Activated naive CD4-positive, alpha-beta T cell treated with anti-CD3 and anti-CD28 coated beads for 36 hours (primary cell): ENCODE measurements at regions of chr10 and their contacts with region 1.

Region 1: DNA sequence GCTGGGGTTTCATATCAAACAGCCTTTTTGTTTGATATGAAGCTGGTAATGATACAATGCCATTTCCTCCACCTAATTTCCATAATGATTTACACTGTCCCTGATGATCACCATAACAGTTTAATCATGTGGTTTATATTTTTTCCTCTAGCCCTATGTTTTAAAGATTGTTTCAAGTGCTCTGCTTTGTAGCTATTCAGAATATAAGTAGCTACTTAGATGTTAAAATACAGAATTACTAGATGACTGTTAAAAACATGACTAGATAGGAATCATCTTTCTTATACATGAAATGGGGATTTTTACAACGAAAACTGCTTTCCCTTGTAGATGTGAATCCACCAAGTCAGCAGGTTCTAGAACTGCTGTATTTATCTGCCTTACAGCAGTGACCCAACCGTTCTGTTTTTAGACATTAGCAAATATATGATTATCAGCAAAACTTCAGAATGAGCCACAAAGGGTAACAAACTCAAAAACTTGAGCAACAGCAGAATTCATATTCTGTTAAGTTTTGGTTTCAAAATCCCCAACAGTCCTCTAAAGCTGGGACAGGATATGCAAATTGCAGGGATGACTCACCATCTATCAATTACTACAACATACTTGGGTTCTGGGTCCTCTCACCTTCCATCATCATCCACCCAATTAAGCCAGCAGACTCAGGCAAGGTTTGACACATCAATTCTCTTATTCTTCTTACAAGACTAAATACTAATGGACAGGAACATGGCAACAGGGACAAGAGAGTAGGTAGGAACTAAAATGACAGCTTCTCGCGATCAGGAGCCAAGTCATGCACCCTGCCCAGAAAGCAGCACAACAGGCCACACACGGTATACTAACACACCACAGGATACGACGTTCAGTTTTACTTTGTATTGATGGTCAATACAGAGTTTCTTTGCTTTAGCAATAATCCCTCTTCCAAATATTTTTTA is 83.9 kb downstream of the PIP4K2A start:
- DNase-seq: peak; percentile 73
- H3K4me3 Mint-ChIP-seq: peak overlapping the region; percentile 67
- H3K27ac Mint-ChIP-seq: peak overlapping the region; percentile 93
- H3K4me1 Mint-ChIP-seq: peaks cover 95% of the 10 kb centered on the region
- H3K27me3 Mint-ChIP-seq: no peaks in the 10 kb centered on the region

Region 2: GRCh38 chr10:22420787-22421517 is 209.6 kb before region 1 on chr10:
- CTCF ChIA-PET with region 1: no interaction called
- intact Hi-C with region 1: no loop called
- DNase-seq: no peak
- H3K4me3 Mint-ChIP-seq: no peak overlapping the region
- H3K27ac Mint-ChIP-seq: no peak overlapping the region
- H3K4me1 Mint-ChIP-seq: no peaks in the 10 kb centered on the region
- H3K27me3 Mint-ChIP-seq: no peaks in the 10 kb centered on the region

Region 3: GRCh38 chr10:22544325-22545068 is 86.0 kb before region 1 on chr10:
- CTCF ChIA-PET with region 1: no interaction called
- intact Hi-C with region 1: no loop called
- DNase-seq: no peak
- H3K4me3 Mint-ChIP-seq: no peak overlapping the region
- H3K27ac Mint-ChIP-seq: no peak overlapping the region
- H3K4me1 Mint-ChIP-seq: peaks cover 3% of the 10 kb centered on the region
- H3K27me3 Mint-ChIP-seq: no peaks in the 10 kb centered on the region

Region 4: DNA sequence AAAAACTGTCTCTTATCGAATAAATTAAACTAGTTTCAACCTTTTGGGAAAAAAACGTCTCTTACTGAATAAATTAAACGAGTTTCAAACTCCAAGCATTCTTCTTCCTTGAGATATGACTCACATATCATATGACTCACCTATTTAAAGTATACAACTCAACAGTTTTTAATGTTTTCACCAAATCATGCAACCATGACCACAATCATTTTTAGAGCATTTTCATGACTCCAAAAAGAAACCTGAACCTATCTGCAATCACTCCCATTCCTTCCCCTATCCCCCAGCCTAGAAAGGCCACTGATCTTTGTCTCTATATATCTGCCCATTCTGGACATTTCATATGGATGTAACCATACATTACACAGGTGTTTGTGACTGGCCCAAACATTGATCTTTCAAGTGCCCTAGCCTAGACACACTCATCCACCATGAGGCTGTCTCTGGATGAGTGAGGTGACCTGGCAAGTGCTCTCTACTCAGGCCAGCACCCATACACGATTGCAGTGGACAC is 31.4 kb before region 1 on chr10:
- CTCF ChIA-PET with region 1: no interaction called
- intact Hi-C with region 1: loop called (anchors 1 kb)
- DNase-seq: no peak
- H3K4me3 Mint-ChIP-seq: no peak overlapping the region
- H3K27ac Mint-ChIP-seq: peak overlapping the region; percentile 9
- H3K4me1 Mint-ChIP-seq: peaks cover 62% of the 10 kb centered on the region
- H3K27me3 Mint-ChIP-seq: no peaks in the 10 kb centered on the region

Region 5: DNA sequence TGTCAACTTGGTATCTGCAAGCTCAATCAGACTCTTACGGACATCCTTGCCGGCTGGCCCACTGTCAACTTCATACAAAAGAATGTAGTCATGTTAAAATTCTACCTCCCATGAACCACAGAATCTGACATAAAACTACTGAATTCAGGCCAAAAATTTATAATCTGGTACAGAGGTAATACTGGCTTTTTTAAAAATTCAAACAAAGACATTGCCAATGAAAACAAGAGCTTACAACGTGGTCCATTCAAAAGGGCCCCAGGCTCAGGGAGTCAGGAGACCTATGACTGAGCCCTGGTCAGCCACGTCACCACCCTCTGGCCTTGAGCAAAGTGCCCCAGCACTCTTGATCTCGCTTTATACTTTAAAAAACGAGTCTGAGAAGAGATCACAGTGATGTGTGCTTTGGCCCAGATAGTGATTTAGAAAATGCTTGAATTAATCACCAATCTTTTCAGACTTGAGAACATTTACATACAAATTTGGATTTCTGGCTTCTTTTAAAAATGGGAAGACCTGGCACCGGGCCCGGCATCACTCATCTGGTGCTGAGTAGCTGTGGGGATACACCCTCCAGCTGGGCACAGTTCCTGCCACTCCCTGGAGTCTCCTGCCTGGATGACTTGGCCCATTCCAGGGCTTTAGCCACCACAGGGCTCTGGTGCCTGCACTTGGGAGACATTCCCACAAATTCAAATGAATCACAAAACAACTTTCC is 10.2 kb before region 1 on chr10:
- CTCF ChIA-PET with region 1: interaction called, 4 read pairs
- intact Hi-C with region 1: loop called (anchors 1 kb)
- DNase-seq: no peak
- H3K4me3 Mint-ChIP-seq: no peak overlapping the region
- H3K27ac Mint-ChIP-seq: no peak overlapping the region
- H3K4me1 Mint-ChIP-seq: peaks cover 91% of the 10 kb centered on the region
- H3K27me3 Mint-ChIP-seq: no peaks in the 10 kb centered on the region

Region 6: GRCh38 chr10:22655311-22655981 is 24.9 kb after region 1 on chr10:
- CTCF ChIA-PET with region 1: interaction called, 5 read pairs
- intact Hi-C with region 1: loop called (anchors 1 kb)
- DNase-seq: peak; percentile 69
- H3K4me3 Mint-ChIP-seq: peak overlapping the region; percentile 46
- H3K27ac Mint-ChIP-seq: peak overlapping the region; percentile 89
- H3K4me1 Mint-ChIP-seq: peaks cover 99% of the 10 kb centered on the region
- H3K27me3 Mint-ChIP-seq: no peaks in the 10 kb centered on the region

Region 7: GRCh38 chr10:22682237-22683139 is 52.0 kb after region 1 on chr10:
- CTCF ChIA-PET with region 1: interaction called, 3 read pairs
- intact Hi-C with region 1: loop called (anchors 1 kb)
- DNase-seq: peak; percentile 73
- H3K4me3 Mint-ChIP-seq: peak overlapping the region; percentile 60
- H3K27ac Mint-ChIP-seq: peak overlapping the region; percentile 97
- H3K4me1 Mint-ChIP-seq: peaks cover 86% of the 10 kb centered on the region
- H3K27me3 Mint-ChIP-seq: no peaks in the 10 kb centered on the region

Region 8: GRCh38 chr10:22714479-22715289 is 84.2 kb after region 1 on chr10 and contains the start of gene PIP4K2A:
- CTCF ChIA-PET with region 1: no interaction called
- intact Hi-C with region 1: loop called (anchors 1 kb)
- DNase-seq: peak; percentile 74
- H3K4me3 Mint-ChIP-seq: peak within 1 kb of the TSS; percentile 88
- H3K27ac Mint-ChIP-seq: peak within 1 kb of the TSS; percentile 79
- H3K4me1 Mint-ChIP-seq: peaks cover 27% of the 10 kb centered on the region
- H3K27me3 Mint-ChIP-seq: no peaks in the 10 kb centered on the region
- total RNA-seq, gene PIP4K2A: 68.0 to 74.1 TPM

Region 9: GRCh38 chr10:22825853-22826346 is 195.4 kb after region 1 on chr10:
- CTCF ChIA-PET with region 1: no interaction called
- intact Hi-C with region 1: no loop called
- DNase-seq: no peak
- H3K4me3 Mint-ChIP-seq: no peak overlapping the region
- H3K27ac Mint-ChIP-seq: no peak overlapping the region
- H3K4me1 Mint-ChIP-seq: no peaks in the 10 kb centered on the region
- H3K27me3 Mint-ChIP-seq: no peaks in the 10 kb centered on the region

Region 10: DNA sequence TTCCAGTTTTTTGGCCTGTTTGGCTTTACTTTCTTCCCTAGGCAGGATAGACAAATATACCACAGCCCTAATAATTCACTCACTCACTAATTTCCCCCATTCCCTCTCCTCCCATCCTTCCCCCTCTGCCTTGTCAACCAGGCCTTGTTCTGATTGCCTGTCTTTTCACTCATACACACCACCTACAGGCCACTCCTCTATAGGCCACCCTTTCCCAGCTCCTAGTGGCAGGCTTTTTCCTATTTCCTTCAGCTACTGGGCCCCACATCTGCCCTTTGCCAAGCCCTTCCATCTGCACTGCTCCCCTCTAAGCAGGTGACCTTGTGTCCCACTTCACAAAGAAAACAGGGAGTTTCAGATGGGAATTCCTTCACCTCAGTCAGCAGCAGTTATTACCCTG is 405.1 kb after region 1 on chr10:
- CTCF ChIA-PET with region 1: no interaction called
- intact Hi-C with region 1: no loop called
- DNase-seq: no peak
- H3K4me3 Mint-ChIP-seq: no peak overlapping the region
- H3K27ac Mint-ChIP-seq: no peak overlapping the region
- H3K4me1 Mint-ChIP-seq: no peaks in the 10 kb centered on the region
- H3K27me3 Mint-ChIP-seq: peaks cover 18% of the 10 kb centered on the region

Region 11: GRCh38 chr10:23448802-23449570 is 818.5 kb after region 1 on chr10:
- CTCF ChIA-PET with region 1: no interaction called
- intact Hi-C with region 1: loop called (anchors 5 kb)
- DNase-seq: no peak
- H3K4me3 Mint-ChIP-seq: peak overlapping the region; percentile 35
- H3K27ac Mint-ChIP-seq: peak overlapping the region; percentile 92
- H3K4me1 Mint-ChIP-seq: peaks cover 42% of the 10 kb centered on the region
- H3K27me3 Mint-ChIP-seq: no peaks in the 10 kb centered on the region